ENCODE measurements at regions of chr7 and their contacts with region 1.

Region 1: DNA sequence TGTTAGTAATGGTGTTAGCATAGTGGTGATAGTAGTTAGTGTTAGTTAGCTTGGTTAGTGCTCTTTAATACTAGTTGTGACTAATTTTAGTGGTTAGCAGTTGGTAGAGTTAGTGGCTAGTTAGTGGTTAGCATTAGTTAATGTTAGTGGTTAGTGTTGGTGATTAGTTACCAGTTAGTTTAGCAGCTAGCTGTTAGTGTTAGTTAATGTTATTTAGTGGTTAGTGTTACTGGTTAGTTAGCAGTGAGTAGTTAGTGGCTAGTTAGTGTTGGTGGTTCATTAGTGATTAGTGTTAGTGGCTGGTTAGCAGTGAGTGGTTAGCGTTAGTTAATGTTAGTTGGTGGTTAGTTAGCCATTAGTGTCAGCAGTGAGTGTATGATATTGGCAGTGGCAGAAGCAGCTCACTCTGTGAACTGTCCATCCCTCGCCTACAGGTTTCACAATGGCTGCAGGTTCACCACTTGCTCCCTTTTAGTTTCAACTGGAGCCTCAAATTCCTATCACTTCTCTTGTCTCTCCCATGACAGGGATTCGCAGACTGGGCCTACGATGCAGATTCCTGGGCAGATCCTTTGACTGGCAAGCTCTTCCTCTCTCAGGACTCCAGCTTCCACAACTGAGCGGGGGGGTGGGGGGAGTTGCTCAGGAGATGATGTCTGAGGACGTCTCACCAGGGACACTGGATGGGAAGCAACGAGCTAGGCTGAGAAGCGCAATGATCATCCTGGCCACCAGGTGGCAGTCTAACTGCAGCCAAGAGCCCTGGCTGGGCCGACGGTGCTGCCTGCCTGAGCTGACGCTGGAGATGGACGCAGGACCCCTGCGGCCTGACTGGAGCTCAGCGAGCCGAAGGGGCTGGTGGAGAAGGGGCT is 19.5 kb downstream of the GHRHR start:
- DNase-seq: peak; percentile 75 to 77
- ATAC-seq: peak; percentile 90 to 97
- H3K4me3 ChIP-seq: no peak overlapping the region
- H3K27ac ChIP-seq: no peak overlapping the region
- H3K4me1 ChIP-seq: peaks cover 3% of the 10 kb centered on the region; the same call in 2 of the 3 replicates
- CTCF ChIP-seq: peak; percentile 87
- EP300 ChIP-seq: no peak
- POLR2A ChIP-seq: no peak
- RAD21 ChIP-seq: peak; percentile 90

Region 2: GRCh38 chr7:30938435-30939316 is 44.6 kb before region 1 on chr7:
- CTCF ChIA-PET with region 1: interaction called, 18 read pairs
- POLR2A ChIA-PET with region 1: no interaction called
- DNase-seq: peak; percentile 81 to 88
- ATAC-seq: peak; percentile 85 to 96
- H3K4me3 ChIP-seq: 0 out of 3 replicates have a peak overlapping the region, but pooled peaks have one; percentile 8
- H3K27ac ChIP-seq: peak overlapping the region in 1 of 2 experiments; percentile 46; a peak in 1 of 6 replicates
- H3K4me1 ChIP-seq: 0 out of 3 replicates have a peak, but pooled peaks cover 3% of the 10 kb centered on the region
- CTCF ChIP-seq: peak; percentile 84
- EP300 ChIP-seq: no peak
- POLR2A ChIP-seq: no peak
- RAD21 ChIP-seq: peak; percentile 50 to 52

Region 3: DNA sequence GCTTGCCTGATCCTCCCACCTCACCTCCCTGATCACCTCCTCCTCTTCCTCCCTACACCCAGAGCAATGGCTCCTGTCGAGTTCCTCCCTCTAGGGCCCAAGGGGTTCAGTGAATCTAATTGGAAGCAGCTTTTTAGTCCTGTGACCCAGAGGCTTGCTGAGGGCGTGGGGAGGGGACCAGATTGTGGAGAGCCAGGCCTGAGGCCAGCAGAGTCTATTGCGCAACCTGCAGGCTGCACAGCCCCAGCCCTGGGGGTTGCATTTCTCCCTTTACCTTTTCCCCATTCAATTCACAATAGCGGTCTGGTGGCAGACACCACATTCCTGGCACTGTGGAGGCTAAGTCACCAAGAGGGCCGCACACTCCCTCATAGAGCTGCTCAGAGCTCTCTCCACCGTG is 13.0 kb after region 1 on chr7:
- CTCF ChIA-PET with region 1: interaction called, 55 read pairs
- POLR2A ChIA-PET with region 1: no interaction called
- DNase-seq: no peak
- ATAC-seq: no peak
- H3K4me3 ChIP-seq: no peak overlapping the region
- H3K27ac ChIP-seq: no peak overlapping the region
- H3K4me1 ChIP-seq: no peaks in the 10 kb centered on the region
- CTCF ChIP-seq: no peak
- EP300 ChIP-seq: no peak
- POLR2A ChIP-seq: no peak
- RAD21 ChIP-seq: no peak

Region 4: GRCh38 chr7:31114593-31115343 is 131.5 kb after region 1 on chr7:
- CTCF ChIA-PET with region 1: interaction called, 319 read pairs
- POLR2A ChIA-PET with region 1: no interaction called
- DNase-seq: peak in 1 of 2 experiments; percentile 26
- ATAC-seq: peak; percentile 54 to 68; a peak in 1 of 6 replicates
- H3K4me3 ChIP-seq: no peak overlapping the region
- H3K27ac ChIP-seq: no peak overlapping the region
- H3K4me1 ChIP-seq: no peaks in the 10 kb centered on the region
- CTCF ChIP-seq: no peak
- EP300 ChIP-seq: no peak
- POLR2A ChIP-seq: no peak
- RAD21 ChIP-seq: no peak